AG04449 (cell line): ENCODE measurements at regions of chr1 and their contacts with region 1.

Region 1: DNA sequence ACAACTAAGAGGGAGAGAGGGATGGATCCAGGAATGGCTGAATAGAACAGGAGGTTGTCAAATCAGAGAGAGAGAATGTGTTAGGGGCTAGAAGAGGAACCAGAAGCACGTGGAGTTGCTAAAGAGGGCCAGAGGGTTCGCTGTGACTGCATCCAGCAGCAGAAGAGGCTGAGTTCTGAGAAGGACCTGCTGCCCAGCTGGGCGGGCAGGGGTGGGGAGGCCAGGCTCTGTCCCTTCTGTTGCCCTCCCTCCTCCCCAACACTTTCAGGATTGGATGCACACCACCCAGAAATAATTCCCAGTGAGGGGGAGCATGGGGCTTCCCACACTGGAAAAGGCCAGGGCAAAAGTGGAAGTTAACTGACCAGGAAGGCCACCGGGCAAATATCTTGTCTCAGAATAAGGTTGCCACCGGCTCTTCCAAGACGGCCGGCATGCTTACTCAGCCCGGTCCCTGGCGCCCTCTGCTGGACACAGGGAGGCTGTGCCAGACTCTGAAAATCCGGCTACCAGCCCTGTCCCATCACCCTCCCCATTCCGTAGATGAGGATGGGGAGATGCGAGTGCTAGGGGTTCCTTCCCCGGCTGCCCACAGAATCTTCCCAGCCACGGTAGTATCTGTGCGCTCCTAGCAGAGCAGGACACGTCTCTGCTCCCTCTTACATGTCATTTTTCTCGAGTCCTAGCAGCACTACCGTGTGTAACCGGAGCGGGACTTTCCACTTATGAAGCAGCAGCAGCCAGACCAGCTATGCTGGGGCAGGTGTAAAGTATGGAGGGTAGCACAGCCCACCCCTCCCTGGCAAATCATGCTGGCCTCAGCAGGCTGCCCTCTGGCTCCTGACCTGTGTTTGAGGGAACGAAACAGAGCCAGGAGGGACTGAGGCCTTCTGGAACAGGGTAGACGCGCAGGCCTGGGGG is 46.8 kb upstream of the A3GALT2 start:
- DNase-seq: no peak
- H3K4me3 ChIP-seq: no peak overlapping the region
- CTCF ChIP-seq: peak; percentile 97

Region 2: DNA sequence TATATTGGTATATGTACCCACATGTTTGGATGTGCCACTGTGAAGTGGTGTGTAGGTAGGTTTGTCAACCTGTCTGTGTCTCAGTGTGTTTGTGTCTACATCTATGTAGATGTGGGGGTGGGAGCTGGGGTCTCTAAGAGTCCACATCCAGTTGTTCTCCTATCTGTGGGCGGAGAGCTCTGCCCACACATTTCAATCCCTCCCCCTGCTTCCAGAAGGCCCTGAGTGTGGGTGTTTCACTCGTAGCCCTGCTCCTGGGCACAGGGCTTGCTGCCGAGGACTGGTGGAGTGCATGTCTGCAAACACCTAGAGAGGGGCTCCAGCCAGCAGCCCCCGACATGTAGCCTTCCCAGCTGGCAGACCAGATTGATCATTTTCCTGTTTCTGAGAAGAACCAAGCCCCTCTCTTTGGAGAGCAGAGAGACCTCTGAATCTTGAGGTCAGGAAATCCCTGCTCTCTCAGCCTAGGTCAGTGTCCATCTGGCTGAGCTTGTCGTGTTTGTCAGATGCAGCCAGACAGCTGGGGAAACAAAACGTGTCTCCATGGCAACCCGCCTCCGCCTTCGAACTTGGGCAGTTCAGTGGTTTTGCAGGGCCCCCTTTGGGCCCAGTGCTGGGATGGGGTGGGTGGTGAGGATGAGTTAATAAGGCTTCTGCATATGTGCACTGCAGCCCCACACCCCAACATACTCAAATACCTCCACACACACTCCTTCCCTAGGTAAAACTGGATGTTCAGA is 634.0 kb before region 1 on chr1:
- CTCF ChIA-PET with region 1: no interaction called
- POLR2A ChIA-PET with region 1: no interaction called
- DNase-seq: no peak
- H3K4me3 ChIP-seq: no peak overlapping the region
- CTCF ChIP-seq: no peak

Region 3: GRCh38 chr1:33152685-33153432 is 214.9 kb before region 1 on chr1:
- CTCF ChIA-PET with region 1: no interaction called
- POLR2A ChIA-PET with region 1: no interaction called
- DNase-seq: no peak
- H3K4me3 ChIP-seq: no peak overlapping the region
- CTCF ChIP-seq: no peak

Region 4: DNA sequence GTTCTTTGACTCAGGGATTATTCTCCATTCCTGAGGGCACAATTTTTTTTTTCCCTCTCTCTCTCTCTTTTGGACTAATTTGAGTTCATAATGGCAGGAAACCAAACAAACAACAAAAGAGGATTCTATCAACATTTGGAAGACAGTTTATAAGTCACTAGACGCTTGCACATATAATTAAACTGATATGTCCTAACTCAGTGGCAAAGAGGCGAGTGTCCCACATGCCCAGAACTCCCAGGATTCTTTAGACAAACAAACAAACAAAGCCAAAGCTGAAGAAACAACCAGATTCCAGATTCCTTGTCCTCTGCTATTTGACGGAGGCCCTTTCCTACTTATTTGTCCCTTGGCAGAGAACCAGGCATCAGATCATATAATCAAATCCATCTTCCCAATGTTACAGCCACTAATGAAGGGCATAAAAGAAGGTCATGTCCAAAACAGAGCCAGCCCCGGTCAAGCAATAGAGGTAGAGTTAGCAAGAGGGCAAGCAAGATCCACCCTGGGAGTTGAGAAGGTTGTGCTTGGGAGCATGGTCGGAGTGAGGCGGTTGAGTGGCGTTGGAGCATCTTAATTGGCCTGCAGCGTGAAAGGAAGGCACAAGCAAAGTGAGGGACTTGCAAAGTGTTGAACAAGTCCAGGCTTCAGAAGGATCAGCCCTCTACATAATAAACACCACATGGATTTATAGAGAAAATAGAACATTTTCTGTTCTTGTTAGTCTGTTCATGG is 81.1 kb before region 1 on chr1:
- CTCF ChIA-PET with region 1: no interaction called
- POLR2A ChIA-PET with region 1: no interaction called
- DNase-seq: no peak
- H3K4me3 ChIP-seq: no peak overlapping the region
- CTCF ChIP-seq: no peak

Region 5: DNA sequence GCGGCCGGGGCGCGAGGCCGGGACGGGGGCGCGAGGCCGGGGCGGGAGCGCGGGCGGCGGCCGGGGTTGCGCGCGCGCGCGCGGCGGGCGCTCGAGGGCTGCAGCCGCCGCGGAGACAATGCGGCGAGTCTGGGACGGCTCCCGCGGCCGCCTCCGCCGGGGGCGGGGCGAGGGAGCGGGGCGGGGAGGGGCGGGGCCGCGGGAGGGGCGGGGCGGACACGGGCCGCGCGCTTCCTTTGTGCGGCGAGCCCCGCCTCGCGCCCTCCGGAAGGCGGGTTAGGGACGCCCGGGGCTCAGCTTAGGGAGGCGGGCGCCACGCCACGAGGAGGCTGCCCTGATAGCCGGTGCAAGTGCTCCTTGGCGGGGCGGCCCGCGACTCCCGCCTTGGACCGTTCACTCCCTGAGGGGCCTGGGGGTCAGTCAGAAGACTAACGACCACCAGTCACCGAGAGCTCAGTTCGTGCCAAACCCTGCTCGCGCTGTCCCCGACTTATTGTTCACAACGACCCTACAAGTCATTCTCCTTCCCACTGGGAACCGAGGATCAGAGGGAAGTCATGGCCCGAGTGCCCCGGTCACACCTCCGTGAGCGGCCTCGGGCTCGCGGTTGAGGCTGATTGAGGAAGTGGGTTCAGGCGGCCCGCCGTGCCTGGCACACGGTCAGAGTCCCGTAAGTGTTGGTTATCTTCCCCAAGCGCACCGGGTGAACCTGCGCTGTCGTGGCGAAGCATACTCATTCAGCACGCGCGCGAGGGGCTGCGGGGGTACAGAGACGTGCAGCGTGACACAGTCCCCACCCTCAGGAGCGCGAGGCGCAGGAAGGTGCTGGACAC is 17.8 kb before region 1 on chr1:
- CTCF ChIA-PET with region 1: interaction called, 40 read pairs
- POLR2A ChIA-PET with region 1: no interaction called
- DNase-seq: no peak
- H3K4me3 ChIP-seq: peak overlapping the region; percentile 77
- CTCF ChIP-seq: no peak

Region 6: GRCh38 chr1:33384040-33384812 is 16.5 kb after region 1 on chr1:
- CTCF ChIA-PET with region 1: interaction called, 79 read pairs
- POLR2A ChIA-PET with region 1: no interaction called
- DNase-seq: peak; percentile 51
- H3K4me3 ChIP-seq: no peak overlapping the region
- CTCF ChIP-seq: no peak

Region 7: DNA sequence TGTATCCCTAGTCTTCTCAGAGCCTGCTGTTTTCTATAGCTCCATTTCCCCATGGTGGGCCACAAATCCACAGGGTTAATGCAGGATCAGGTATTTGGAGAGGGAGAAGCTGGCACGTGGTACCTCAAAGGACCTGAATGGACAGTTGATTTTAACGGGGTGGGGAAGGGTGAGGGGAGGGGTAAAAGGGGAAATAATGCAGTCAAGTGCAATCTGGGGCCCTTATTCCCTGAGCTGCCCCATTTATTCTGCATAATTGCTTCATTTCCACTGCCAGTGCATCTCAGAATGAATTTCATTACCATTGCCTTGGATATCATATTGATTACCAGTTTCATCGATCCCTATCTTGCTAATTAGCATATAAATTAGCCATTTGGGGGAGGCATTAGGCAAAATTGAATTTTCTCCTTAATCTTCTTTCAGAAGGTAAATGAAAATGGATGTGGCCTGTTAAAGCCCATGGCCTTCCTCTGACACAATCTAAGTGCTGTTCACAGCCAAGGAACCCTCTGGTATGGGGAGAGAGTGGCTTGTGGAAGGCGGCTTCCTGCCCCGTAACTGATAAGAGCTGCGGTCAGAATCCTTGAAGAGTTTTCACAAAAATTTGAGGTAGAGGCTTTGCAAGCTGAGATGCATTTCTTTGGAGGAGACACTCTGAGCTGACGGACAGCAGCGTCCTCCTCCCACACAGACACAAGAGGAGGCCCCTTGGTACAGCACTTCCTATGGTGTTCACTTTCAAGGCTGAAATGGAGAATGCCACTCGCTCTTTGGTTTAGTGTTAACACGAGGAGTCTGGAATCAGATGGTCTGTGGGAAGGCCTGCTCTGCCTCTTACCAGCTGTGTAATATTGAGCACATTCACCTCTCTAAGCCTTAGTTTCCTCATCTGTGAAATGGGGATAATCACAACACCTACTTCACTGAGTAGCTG is 28.7 kb after region 1 on chr1:
- CTCF ChIA-PET with region 1: no interaction called
- POLR2A ChIA-PET with region 1: no interaction called
- DNase-seq: no peak
- H3K4me3 ChIP-seq: no peak overlapping the region
- CTCF ChIP-seq: no peak